ENCODE measurements at regions of chr1 and their contacts with region 1.

Region 1: GRCh38 chr1:61724813-61725694 is at the start of gene TM2D1:
- DNase-seq: peak; percentile 95
- H3K27ac ChIP-seq: peak within 1 kb of the TSS; percentile 88
- CTCF ChIP-seq: no peak

Region 2: DNA sequence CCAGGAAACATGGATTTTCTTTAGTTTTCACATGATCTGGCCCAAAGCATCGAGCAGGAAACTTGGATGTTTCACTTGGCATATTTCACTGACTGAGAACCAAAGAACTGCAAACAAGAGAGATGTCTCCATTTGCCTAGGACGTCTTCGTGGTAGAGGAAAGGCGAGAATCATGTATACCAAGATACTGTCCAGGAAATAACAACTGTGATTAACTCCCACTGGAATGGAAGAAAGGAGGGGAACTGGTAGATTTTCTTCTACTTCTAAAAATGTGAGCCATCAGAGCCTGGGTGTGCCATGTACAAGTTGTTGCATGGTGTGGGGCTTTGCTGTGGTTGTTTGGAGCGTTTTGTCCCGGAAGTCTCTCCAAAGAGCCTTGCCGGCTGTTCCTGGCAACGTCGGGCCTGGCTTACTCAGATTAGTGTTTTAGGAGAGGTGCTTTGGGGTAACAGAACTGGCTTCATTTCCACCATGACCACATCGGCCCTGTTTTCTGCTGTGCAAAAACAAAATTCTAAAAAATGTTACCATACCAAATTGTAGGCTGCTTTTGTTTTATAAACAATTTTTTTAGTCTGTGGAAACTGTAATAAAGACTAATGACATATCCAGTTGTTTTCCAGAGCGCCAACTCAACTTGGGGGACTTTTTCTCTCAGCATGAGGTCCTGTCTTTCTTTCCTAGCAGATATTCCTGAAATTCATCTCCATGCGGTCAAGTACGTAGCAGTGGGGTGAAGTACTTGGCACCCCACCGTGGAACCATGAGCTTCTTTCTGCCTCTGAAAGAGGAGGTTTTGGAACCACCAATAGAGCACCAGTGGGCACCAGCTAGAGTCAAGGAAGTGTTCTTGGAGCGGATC is 118.4 kb before region 1 on chr1:
- CTCF ChIA-PET with region 1: no interaction called
- POLR2A ChIA-PET with region 1: no interaction called
- DNase-seq: peak; percentile 52
- H3K27ac ChIP-seq: peak overlapping the region; percentile 95
- CTCF ChIP-seq: no peak

Region 3: GRCh38 chr1:61654082-61654481 is 71.0 kb before region 1 on chr1:
- CTCF ChIA-PET with region 1: no interaction called
- POLR2A ChIA-PET with region 1: no interaction called
- DNase-seq: no peak
- H3K27ac ChIP-seq: no peak overlapping the region
- CTCF ChIP-seq: no peak

Region 4: GRCh38 chr1:61708953-61709907 is 15.8 kb before region 1 on chr1:
- CTCF ChIA-PET with region 1: no interaction called
- POLR2A ChIA-PET with region 1: no interaction called
- DNase-seq: no peak
- H3K27ac ChIP-seq: no peak overlapping the region
- CTCF ChIP-seq: no peak

Region 5: GRCh38 chr1:61828805-61829204 is 103.8 kb after region 1 on chr1:
- CTCF ChIA-PET with region 1: interaction called, 10 read pairs
- POLR2A ChIA-PET with region 1: no interaction called
- DNase-seq: no peak
- H3K27ac ChIP-seq: no peak overlapping the region
- CTCF ChIP-seq: no peak

Region 6: GRCh38 chr1:62057641-62058295 is 332.7 kb after region 1 on chr1:
- CTCF ChIA-PET with region 1: no interaction called
- POLR2A ChIA-PET with region 1: no interaction called
- DNase-seq: no peak
- H3K27ac ChIP-seq: no peak overlapping the region
- CTCF ChIP-seq: no peak